Activated B cell treated with CpG ODN at 0.5 μM for 24 hours (primary cell): ENCODE measurements at regions of chr1 and their contacts with region 1.

Region 1: GRCh38 chr1:19468397-19468956 is 16.9 kb downstream of the CAPZB start:
- DNase-seq: no peak
- ATAC-seq: peak; percentile 74
- H3K4me3 Mint-ChIP-seq: peak overlapping the region; percentile 76
- H3K27ac Mint-ChIP-seq: peak overlapping the region; percentile 95
- H3K4me1 Mint-ChIP-seq: peaks cover 98% of the 10 kb centered on the region
- H3K27me3 Mint-ChIP-seq: no peaks in the 10 kb centered on the region
- CTCF ChIP-seq: no peak

Region 2: DNA sequence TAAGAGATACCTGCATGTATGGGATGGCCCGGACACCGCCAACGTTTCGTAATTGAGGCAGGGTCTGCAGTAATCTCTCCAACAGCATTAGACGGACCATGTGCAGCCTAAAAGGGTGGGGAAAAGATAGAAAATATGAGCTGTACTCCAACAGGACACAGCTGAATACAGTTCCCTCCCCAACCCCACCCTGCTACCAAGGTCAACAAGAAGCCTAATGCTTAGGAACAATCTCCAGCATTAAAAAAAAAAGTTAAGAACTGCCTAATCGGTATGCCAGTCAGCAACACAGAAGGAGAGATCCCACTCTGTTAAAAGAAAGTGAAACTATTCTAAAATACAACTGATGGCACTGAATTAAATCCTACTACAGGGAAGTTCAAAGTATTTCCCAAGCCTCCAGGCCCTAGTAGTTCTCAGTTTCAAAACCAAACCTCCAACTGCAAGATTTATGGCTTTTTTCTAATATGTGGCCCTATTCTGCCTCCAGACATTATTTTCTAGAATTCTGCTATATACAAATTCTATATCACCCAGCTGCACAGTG is 339.4 kb before region 1 on chr1:
- CTCF ChIA-PET with region 1: no interaction called
- POLR2A ChIA-PET with region 1: interaction called, 12 read pairs
- intact Hi-C with region 1: no loop called
- DNase-seq: no peak
- ATAC-seq: no peak
- H3K4me3 Mint-ChIP-seq: no peak overlapping the region
- H3K27ac Mint-ChIP-seq: no peak overlapping the region
- H3K4me1 Mint-ChIP-seq: peaks cover 5% of the 10 kb centered on the region
- H3K27me3 Mint-ChIP-seq: no peaks in the 10 kb centered on the region
- CTCF ChIP-seq: no peak

Region 3: DNA sequence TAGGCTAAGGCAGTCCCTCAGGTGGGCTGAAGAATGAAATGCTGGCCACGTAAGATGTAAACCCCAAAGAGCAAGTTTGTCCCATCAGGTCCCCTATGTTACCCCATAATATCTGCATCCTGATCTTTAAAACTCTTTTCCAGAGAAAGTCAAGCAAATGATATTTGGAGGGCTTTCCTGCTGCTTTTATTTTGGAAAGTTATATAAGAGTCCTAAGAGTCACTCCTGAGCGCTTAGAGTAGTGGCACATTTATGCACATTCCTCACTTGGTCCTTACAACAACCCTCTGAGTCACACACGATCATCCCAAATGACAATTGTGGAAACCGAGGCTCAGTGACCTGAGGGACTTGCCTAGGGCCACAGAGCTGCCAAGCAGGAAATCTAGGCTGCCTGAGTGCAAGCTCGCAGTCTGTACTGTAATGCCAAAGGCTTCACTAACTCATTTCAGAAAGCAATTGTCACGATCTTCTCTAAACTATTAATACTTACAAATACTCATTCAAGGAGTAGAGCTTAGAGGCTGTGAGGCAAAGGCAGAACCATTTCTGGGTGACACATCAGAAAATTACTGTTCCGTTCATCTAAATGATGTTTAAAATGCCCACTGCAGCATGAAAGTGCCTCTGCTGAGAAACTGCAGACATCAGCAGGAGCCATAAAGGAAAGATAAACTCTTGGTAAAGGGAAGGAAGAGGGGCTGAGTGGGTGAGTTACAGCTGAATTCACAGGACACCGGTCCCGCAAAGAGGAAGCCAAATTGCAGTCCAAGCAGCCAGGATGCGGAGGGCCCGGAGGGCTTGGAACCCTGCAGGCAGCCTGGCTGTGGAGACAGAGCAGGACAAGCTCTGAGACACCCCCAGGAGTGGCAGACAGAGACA is 14.0 kb before region 1 on chr1:
- CTCF ChIA-PET with region 1: no interaction called
- POLR2A ChIA-PET with region 1: interaction called, 5 read pairs
- intact Hi-C with region 1: loop called (anchors 2 kb)
- DNase-seq: no peak
- ATAC-seq: peak; percentile 54
- H3K4me3 Mint-ChIP-seq: peak overlapping the region; percentile 49
- H3K27ac Mint-ChIP-seq: peak overlapping the region; percentile 84
- H3K4me1 Mint-ChIP-seq: peaks cover 88% of the 10 kb centered on the region
- H3K27me3 Mint-ChIP-seq: no peaks in the 10 kb centered on the region
- CTCF ChIP-seq: no peak